Naive thymus-derived CD4-positive, alpha-beta T cell (primary cell): ENCODE measurements at regions of chr20 and their contacts with region 1.

Region 1: DNA sequence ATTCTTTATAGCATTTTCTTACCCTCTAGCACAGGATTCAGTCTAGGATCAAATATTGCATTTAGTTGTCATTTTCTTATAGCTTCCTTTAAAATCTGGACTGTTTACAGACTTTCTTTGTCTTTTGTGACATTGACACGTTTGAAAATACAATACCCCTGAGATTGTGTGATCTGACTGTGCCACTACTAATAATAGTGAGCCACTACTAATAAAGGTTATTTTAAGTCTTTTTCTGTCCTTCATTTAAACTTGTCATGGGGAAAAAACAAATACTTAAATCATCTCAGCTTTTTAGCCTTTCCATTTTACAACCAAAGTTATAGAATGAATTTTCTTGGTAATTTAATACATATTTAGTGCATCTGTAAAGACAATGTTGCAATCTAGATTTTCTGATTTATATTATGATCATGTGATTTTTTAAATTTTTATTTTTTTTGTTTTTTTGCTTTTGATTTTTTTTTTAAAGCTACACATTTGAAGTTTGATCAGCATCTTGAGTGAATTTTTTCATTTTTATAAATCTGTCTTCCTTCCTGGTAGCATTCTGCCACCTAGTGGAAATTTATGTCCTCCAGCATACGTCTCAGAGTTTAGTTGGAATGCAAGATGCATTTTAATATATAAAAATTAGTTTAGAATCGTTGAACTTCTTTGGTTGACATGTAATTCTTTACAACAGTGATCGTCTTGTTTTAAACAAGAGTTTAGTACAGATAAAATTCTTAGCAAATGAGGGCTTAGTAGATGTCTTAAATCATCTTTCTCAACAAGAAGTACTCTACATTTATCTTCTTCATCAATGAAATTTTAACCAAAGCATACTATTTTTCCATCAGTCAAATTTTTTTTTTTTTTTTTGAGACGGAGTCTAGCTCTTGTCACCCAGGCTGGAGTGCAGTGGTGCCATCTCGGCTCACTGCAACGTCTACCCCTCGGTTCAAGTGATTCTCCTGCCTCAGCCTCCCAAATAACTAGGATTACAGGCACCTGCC is 119.4 kb downstream of the NCOA3 start:
- DNase-seq: peak in 7 of 9 donors; percentile 18 to 61 (median 43)
- ATAC-seq: peak; percentile 58
- H3K4me3 ChIP-seq: no peak overlapping the region
- H3K4me3 Mint-ChIP-seq: no peak overlapping the region
- H3K27ac ChIP-seq: no peak overlapping the region
- H3K27ac Mint-ChIP-seq: peak overlapping the region in 6 of 9 donors; percentile 2 to 44 (median 10)
- H3K4me1 ChIP-seq: no peaks in the 10 kb centered on the region
- H3K4me1 Mint-ChIP-seq: peaks cover 6 to 52% (median 23%) of the 10 kb centered on the region in 7 donors
- H3K27me3 ChIP-seq: no peaks in the 10 kb centered on the region
- H3K27me3 Mint-ChIP-seq: no peaks in the 10 kb centered on the region

Region 2: GRCh38 chr20:47196091-47197081 is 424.7 kb before region 1 on chr20:
- CTCF ChIA-PET with region 1: interaction called, 3 read pairs
- POLR2A ChIA-PET with region 1: interaction called, 4 read pairs
- intact Hi-C with region 1: loop called (anchors 1 to 2 kb)
- DNase-seq: peak; percentile 38 to 85 (median 54)
- ATAC-seq: peak; percentile 91
- H3K4me3 ChIP-seq: no peak overlapping the region
- H3K4me3 Mint-ChIP-seq: peak overlapping the region in 1 of 10 donors; percentile 38
- H3K27ac ChIP-seq: no peak overlapping the region
- H3K27ac Mint-ChIP-seq: no peak overlapping the region
- H3K4me1 ChIP-seq: no peaks in the 10 kb centered on the region
- H3K4me1 Mint-ChIP-seq: peaks cover 0 to 12% (median 0%) of the 10 kb centered on the region in 7 donors
- H3K27me3 ChIP-seq: no peaks in the 10 kb centered on the region
- H3K27me3 Mint-ChIP-seq: peaks cover 0 to 8% (median 0%) of the 10 kb centered on the region in 5 donors

Region 3: GRCh38 chr20:47765704-47766686 is 144.9 kb after region 1 on chr20:
- CTCF ChIA-PET with region 1: no interaction called
- POLR2A ChIA-PET with region 1: no interaction called
- intact Hi-C with region 1: no loop called
- DNase-seq: no peak
- ATAC-seq: no peak
- H3K4me3 ChIP-seq: no peak overlapping the region
- H3K4me3 Mint-ChIP-seq: no peak overlapping the region
- H3K27ac ChIP-seq: no peak overlapping the region
- H3K27ac Mint-ChIP-seq: peak overlapping the region in 1 of 9 donors; percentile 52
- H3K4me1 ChIP-seq: no peaks in the 10 kb centered on the region
- H3K4me1 Mint-ChIP-seq: peaks cover 0 to 10% (median 0%) of the 10 kb centered on the region in 7 donors
- H3K27me3 ChIP-seq: no peaks in the 10 kb centered on the region
- H3K27me3 Mint-ChIP-seq: peaks cover 6 to 23% (median 16%) of the 10 kb centered on the region in 5 donors